Dendritic cell treated with granulocyte-macrophage colony-stimulating factor and Interleukin-4, amounts not matched to agents 40 ng/mL and 50 ng/mL, for 4 days (primary cell): ENCODE measurements at regions of chr14 and their contacts with region 1.

Region 1: DNA sequence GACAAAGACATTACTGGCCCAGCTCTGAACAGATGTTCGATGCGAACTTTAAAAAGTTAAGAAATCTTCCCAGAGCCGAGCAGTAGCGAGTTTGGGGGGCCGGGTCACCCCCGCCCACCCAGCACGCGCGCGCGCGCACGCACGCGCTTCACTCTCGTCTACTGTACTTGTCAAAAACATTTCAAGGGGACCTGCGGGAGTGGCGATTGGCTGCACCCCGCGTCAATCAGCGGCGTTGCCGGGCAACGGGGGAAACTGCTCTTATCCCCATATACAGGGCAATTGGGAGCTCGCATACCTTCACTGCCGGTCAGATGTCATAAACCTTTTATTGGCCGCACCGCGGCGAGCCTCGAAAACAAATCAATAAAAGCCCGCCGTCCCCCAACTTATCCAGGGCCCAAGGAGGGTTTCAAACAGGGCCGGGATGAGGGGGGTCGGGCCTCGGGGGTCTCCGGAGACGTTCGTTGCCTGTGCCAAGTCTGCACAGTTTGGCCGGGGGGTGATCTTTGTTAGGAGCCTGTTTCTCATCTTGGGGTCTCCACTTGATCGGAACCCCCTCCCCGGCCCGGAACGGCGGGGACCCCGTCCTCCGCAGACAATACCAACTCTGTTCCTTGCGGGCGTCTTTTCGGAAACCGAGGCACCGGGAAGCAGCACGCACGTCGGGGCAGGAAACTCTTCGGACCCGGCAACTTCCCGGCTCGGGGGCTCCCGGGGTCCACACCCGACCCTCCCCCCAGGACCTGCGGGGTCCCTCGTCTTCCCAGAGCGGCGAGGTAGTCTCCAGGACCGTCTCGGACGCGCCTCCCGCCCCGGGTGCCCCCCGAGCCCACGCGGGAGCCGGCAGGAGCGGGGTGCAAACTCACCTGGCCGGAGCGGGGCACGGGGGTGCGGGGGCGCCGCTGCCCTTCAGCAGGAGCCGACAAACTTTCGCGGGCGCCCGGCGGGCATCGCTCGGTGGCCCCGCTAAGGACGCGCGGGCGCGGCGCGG is 734 bp downstream of the FOXN3 start:
- H3K4me3 Mint-ChIP-seq: peak overlapping the region; percentile 92
- H3K27ac Mint-ChIP-seq: peak overlapping the region; percentile 99
- H3K4me1 Mint-ChIP-seq: peaks cover 70% of the 10 kb centered on the region
- H3K27me3 Mint-ChIP-seq: no peaks in the 10 kb centered on the region

Region 2: DNA sequence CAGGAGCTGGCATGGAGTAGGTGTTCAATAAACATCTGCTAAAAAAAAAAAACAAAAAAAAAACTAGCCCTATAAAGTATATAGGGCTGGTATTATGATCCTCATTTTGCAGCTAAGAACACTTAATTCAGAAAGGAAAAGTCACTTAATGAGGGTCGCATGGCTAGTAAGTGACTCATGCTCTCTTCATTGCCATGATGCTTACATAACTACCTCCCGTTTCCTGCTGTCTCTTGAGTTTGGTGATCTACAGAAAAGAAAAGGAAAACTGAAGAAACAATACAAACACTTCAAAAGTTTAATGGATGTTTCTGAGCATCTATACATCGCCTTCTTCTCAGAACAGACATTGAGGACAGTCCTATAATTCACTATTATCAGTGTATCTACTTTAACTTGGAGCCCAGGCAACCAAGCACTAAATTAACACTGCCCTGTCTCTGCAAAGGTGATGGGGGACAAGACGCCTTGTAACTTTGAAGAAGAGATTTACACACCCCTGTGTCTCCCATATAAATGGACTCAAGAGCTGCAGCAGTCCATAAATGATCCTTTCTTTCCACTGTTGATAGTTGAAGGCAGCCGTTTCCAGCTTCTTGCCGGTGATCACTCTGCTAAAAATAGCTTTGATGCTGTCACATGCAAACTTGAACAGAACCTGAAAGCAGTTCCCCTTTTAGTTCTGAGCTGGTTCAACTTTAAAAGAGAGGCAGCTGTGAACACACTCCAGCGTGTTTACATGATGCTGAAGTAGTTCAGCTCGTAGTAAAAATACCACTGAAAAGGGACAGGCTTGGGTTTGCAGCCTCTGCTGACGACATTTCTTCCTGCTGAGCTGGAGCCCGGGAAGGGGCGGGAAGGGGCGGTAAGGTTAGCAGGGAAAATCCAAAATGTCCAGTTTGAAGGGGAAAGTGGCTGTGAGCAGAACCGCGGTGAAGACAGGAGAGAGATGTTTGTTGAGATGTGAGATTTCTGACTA is 112.6 kb before region 1 on chr14:
- intact Hi-C with region 1: loop called (anchors 5 kb)
- H3K4me3 Mint-ChIP-seq: peak overlapping the region; percentile 78
- H3K27ac Mint-ChIP-seq: peak overlapping the region; percentile 96
- H3K4me1 Mint-ChIP-seq: peaks cover 64% of the 10 kb centered on the region
- H3K27me3 Mint-ChIP-seq: no peaks in the 10 kb centered on the region

Region 3: GRCh38 chr14:89365061-89365801 is 51.1 kb before region 1 on chr14:
- intact Hi-C with region 1: loop called (anchors 2 kb)
- H3K4me3 Mint-ChIP-seq: peak overlapping the region; percentile 34
- H3K27ac Mint-ChIP-seq: peak overlapping the region; percentile 86
- H3K4me1 Mint-ChIP-seq: peaks cover 62% of the 10 kb centered on the region
- H3K27me3 Mint-ChIP-seq: no peaks in the 10 kb centered on the region

Region 4: DNA sequence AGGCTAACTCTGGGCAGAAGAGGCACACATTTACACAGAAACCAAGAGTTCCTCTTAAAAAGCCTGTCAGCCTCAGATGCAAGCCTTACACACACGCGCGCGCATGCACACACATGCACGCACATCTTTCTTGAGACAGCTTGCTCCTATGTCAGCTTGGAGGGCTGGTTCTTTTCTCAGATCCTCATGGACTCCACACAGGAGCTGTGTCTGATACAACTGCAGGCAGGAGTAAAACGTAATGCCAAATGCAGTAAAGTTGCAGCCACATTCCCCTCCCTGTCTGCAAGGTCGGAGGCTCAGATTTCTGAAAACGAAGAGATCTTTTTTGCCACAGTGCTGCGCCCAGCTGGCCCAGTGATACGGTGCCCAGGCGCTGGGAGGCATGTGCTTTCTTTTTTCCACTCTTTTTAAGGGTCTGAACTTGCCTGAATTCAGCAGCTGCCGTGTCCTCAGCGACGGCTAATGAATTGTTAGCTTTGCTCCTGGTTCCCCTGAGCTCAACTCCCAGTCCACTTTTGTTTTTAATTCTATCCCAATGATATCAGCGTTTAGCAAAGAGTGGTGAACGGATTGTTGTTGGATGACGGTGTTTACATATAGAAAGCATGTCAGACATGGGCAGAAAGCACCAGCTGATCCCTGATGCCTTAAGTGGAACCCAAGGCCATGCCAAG is 73.6 kb after region 1 on chr14:
- intact Hi-C with region 1: loop called (anchors 5 kb)
- H3K4me3 Mint-ChIP-seq: no peak overlapping the region
- H3K27ac Mint-ChIP-seq: peak overlapping the region; percentile 66
- H3K4me1 Mint-ChIP-seq: peaks cover 48% of the 10 kb centered on the region
- H3K27me3 Mint-ChIP-seq: no peaks in the 10 kb centered on the region

Region 5: GRCh38 chr14:89618811-89619551 is 202.7 kb after region 1 on chr14:
- intact Hi-C with region 1: loop called (anchors 5 kb)
- H3K4me3 Mint-ChIP-seq: peak overlapping the region; percentile 83
- H3K27ac Mint-ChIP-seq: peak overlapping the region; percentile 80
- H3K4me1 Mint-ChIP-seq: peaks cover 46% of the 10 kb centered on the region
- H3K27me3 Mint-ChIP-seq: peaks cover 3% of the 10 kb centered on the region

Region 6: GRCh38 chr14:89773644-89774316 is 357.5 kb after region 1 on chr14:
- intact Hi-C with region 1: loop called (anchors 10 kb)
- H3K4me3 Mint-ChIP-seq: no peak overlapping the region
- H3K27ac Mint-ChIP-seq: no peak overlapping the region
- H3K4me1 Mint-ChIP-seq: peaks cover 47% of the 10 kb centered on the region
- H3K27me3 Mint-ChIP-seq: peaks cover 9% of the 10 kb centered on the region

Region 7: GRCh38 chr14:89915114-89915878 is 499.0 kb after region 1 on chr14:
- intact Hi-C with region 1: loop called (anchors 10 kb)
- H3K4me3 Mint-ChIP-seq: no peak overlapping the region
- H3K27ac Mint-ChIP-seq: no peak overlapping the region
- H3K4me1 Mint-ChIP-seq: peaks cover 17% of the 10 kb centered on the region
- H3K27me3 Mint-ChIP-seq: no peaks in the 10 kb centered on the region